ENCODE measurements at regions of chr2 and their contacts with region 1.

Region 1: DNA sequence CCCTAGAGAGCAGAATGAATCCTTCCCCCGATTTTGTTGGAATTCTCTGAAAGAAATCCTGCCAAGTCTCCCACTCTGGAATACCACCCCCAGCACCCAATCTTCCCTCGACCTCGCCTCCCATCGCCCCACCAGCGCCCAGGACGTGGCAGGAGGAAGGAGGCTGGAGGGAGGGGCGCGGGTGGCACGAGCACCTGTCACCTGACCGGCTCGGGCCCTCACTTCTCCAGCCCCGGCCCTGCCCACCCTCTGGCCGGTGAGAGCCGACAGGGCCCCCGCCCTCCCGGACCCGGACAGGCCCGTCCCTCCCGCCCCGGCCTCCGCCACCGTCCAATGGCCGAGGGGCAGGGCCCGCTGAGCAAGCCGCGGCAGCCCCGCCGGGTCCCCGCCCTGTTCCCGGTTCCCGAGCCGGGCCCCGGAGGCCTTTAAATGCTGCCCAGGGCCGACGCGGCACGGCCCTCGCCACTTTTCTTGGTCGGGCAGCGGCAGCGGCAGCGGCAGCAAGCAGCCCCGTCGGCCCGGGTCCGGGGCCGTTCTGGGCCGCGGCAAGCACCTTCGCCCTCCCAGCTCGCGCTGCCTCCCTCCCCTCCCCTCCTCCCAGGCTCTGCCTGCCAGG is at the start of gene LGALSL:
- DNase-seq: peak; percentile 85
- ATAC-seq: peak; percentile 87
- total RNA-seq, gene LGALSL: 6.6 TPM

Region 2: DNA sequence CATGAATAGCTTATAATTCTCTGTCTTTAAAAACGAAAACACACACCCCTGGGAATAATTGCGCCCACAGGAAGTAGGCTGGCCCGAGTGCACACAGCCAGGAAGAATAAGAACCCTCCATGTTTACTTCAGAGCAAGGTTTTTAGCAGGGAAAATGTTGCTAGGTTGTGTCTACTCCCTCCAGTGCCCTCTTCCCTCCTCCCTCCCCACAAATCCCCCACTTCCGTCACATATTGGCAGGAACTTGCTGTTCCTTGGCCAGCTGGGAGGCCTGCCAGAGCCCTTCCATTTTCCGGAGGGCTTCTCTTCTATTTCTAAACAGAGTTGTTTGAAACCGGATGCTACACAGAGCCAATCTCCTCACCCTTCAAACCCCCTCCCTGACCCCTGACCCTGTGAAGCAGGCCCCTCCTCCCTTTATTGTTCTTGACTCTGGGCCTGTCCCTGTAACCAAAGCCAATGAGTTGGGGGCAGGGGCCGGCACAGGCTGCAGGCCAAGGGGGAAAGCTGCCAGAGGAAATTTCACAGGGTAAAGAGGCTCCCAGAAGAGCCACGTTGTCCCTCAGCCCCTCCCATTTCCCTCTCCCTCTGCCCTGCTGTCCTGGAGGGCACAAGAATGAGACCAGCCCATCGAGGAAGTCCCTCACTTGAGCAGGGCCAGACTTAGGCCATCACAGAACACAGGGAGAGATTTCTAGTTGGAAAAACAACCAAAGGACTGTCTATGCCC is 49.7 kb before region 1 on chr2:
- intact Hi-C with region 1: loop called (anchors 1 kb)
- DNase-seq: peak; percentile 85
- ATAC-seq: peak; percentile 86

Region 3: GRCh38 chr2:64698668-64699444 is 245.0 kb after region 1 on chr2:
- intact Hi-C with region 1: no loop called
- DNase-seq: no peak
- ATAC-seq: no peak